Body of pancreas (tissue), 4 donors: ENCODE measurements at regions of chr12 and their contacts with region 1.

Region 1: GRCh38 chr12:42589465-42590329 is at the start of gene PRICKLE1:
- DNase-seq: peak; percentile 34 to 64 (median 46)
- ATAC-seq: peak; percentile 91
- H3K4me3 ChIP-seq: peak within 1 kb of the TSS; percentile 60 to 86
- H3K27ac ChIP-seq: peak within 1 kb of the TSS; percentile 23 to 70 (median 60)
- H3K4me1 ChIP-seq: peaks cover 17% of the 10 kb centered on the region
- H3K27me3 ChIP-seq: no peaks in the 10 kb centered on the region
- CTCF ChIP-seq: peak in 1 of 7 experiments; percentile 14
- POLR2A ChIP-seq: peak; percentile 22 to 33 (median 32)
- total RNA-seq, gene PRICKLE1: 3.6 to 4.7 TPM

Region 2: DNA sequence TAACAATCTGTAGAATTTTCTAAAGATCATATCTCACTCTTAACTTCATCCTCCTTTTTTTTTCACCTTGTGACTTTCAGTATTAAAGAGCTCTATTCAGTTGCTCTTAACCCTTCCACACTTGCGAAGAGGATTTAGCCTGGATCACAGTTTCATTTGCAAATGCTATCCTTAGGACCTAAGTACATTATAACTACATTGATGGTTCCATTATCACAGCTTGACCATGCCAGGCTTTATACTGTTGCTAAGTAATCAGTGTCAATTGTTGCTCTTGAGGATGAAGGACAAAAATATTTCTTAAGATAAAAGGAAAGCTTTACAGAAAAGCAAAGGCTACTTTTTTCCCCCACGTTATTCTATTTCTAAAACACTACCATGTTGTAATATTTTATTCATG is 1279.3 kb before region 1 on chr12:
- intact Hi-C with region 1: no loop called
- DNase-seq: no peak
- ATAC-seq: no peak
- H3K4me3 ChIP-seq: no peak overlapping the region
- H3K27ac ChIP-seq: no peak overlapping the region
- H3K4me1 ChIP-seq: no peaks in the 10 kb centered on the region
- H3K27me3 ChIP-seq: no peaks in the 10 kb centered on the region
- CTCF ChIP-seq: no peak
- POLR2A ChIP-seq: no peak

Region 3: DNA sequence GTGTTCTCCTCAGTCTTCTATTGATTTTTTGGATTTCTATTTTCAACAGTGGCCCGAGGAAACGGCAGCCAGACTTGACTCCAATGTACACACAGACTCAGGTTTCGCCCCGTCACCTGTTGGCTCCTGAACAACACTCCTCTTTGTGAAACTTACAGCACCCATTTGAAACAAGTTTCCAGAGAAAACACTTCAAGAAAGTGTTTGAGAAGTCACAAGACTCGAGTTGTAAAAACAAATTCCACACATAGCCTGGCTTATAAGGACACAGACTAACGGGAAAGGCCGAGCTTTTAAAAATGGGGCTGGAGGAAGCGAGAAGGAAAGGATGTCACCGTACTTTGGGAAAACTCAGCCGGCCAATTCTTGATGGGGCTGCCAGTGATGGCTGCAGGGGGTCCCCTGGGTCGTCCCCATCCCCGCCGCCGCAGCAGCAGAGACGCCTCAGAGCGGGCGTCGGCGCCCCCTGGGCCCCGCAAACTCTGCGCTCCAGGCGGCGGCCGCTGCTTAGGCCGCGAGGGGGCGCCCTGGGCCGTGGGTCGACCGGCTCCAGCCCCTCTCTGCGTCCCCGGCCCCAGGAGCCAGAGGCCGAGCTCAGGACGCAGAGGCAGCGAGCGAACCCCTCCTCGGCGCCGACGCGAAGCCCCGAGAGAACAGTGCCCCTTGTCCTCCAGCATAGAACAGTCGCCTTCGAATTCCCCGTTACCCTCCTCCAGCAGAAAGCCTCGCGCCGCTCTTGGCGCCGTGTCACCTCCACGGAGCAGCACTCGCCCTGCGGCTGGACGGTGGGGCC is 107.1 kb before region 1 on chr12:
- intact Hi-C with region 1: loop called (anchors 10 kb)
- DNase-seq: peak; percentile 72 to 84 (median 76)
- ATAC-seq: peak; percentile 86
- H3K4me3 ChIP-seq: peak overlapping the region; percentile 25 to 40
- H3K27ac ChIP-seq: peak overlapping the region; percentile 51 to 81 (median 58)
- H3K4me1 ChIP-seq: peaks cover 14% of the 10 kb centered on the region
- H3K27me3 ChIP-seq: no peaks in the 10 kb centered on the region
- CTCF ChIP-seq: peak; percentile 78 to 96 (median 80)
- POLR2A ChIP-seq: peak in 2 of 3 donors; percentile 14 to 35